Activated B cell treated with CpG ODN at 0.5 μM for 24 hours (primary cell): ENCODE measurements at regions of chr11 and their contacts with region 1.

Region 1: GRCh38 chr11:81644239-81644840 is 1089.3 kb downstream of the FAM181B start:
- DNase-seq: no peak
- ATAC-seq: peak; percentile 57
- H3K4me3 Mint-ChIP-seq: no peak overlapping the region
- H3K27ac Mint-ChIP-seq: no peak overlapping the region
- H3K4me1 Mint-ChIP-seq: no peaks in the 10 kb centered on the region
- H3K27me3 Mint-ChIP-seq: peaks cover 2% of the 10 kb centered on the region
- CTCF ChIP-seq: peak; percentile 31

Region 2: DNA sequence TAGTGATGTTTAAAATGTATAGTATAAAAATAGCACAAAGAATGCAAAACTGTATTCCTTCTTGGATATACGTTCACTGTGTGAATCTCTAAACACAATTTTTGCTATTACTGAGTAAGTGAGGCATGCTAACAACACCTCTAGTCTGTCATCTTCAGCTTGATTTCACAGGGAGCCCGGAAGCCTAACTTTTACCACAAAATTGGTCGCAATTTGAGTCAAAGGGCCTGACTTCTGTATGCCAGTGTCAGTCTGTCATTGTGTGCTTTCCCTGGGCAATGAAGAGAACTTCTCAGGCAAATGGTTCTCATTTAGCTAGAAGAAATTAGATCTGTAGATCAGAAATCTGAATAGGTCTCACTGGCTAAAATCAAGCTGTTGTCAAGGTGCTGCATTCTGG is 29.9 kb after region 1 on chr11:
- CTCF ChIA-PET with region 1: no interaction called
- POLR2A ChIA-PET with region 1: no interaction called
- intact Hi-C with region 1: no loop called
- DNase-seq: no peak
- ATAC-seq: no peak
- H3K4me3 Mint-ChIP-seq: no peak overlapping the region
- H3K27ac Mint-ChIP-seq: no peak overlapping the region
- H3K4me1 Mint-ChIP-seq: no peaks in the 10 kb centered on the region
- H3K27me3 Mint-ChIP-seq: no peaks in the 10 kb centered on the region
- CTCF ChIP-seq: no peak

Region 3: GRCh38 chr11:81787584-81788049 is 143.3 kb after region 1 on chr11:
- CTCF ChIA-PET with region 1: interaction called, 5 read pairs
- POLR2A ChIA-PET with region 1: no interaction called
- intact Hi-C with region 1: loop called (anchors 1 kb)
- DNase-seq: no peak
- ATAC-seq: no peak
- H3K4me3 Mint-ChIP-seq: no peak overlapping the region
- H3K27ac Mint-ChIP-seq: no peak overlapping the region
- H3K4me1 Mint-ChIP-seq: no peaks in the 10 kb centered on the region
- H3K27me3 Mint-ChIP-seq: no peaks in the 10 kb centered on the region
- CTCF ChIP-seq: peak; percentile 19

Region 4: DNA sequence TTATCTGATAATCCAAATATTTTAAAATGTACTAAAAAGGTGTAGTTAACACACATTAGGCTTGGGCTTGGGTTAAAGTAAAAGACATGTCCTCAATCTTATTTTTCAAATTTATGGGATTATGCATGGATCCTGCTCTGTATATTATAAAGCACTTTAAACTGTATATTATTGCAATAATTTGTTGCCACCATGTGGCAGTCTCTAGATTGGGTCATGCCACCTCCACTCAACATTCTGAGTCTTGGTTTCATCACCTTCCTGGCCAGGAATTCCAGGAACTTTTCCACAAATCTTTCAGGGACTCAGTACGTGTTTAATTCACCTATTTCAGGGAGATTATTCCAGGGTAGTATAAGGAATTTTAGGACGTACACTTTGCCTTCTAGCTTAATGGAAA is 393.8 kb after region 1 on chr11:
- CTCF ChIA-PET with region 1: no interaction called
- POLR2A ChIA-PET with region 1: no interaction called
- intact Hi-C with region 1: loop called (anchors 1 kb)
- DNase-seq: no peak
- ATAC-seq: no peak
- H3K4me3 Mint-ChIP-seq: no peak overlapping the region
- H3K27ac Mint-ChIP-seq: no peak overlapping the region
- H3K4me1 Mint-ChIP-seq: no peaks in the 10 kb centered on the region
- H3K27me3 Mint-ChIP-seq: no peaks in the 10 kb centered on the region
- CTCF ChIP-seq: no peak

Region 5: DNA sequence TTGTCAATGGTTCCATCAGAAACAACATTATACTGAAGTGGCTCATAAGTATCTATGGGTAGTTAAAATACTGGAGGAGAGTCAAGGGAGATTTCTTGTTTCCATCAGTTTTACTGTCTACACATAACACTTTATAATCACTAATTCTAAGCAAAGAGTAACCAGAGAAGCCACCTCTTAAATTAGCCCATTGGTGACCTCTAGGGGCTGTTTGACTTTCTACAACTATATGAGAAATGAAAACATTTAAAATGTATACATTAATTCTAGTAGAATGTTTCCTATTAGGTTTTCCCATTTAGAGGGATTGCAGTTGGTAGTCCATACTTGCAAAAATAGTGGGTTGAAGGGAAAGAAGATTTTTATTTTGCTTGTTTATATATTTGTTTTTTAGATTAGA is 585.0 kb after region 1 on chr11:
- CTCF ChIA-PET with region 1: interaction called, 3 read pairs
- POLR2A ChIA-PET with region 1: no interaction called
- intact Hi-C with region 1: loop called (anchors 1 kb)
- DNase-seq: no peak
- ATAC-seq: no peak
- H3K4me3 Mint-ChIP-seq: no peak overlapping the region
- H3K27ac Mint-ChIP-seq: no peak overlapping the region
- H3K4me1 Mint-ChIP-seq: no peaks in the 10 kb centered on the region
- H3K27me3 Mint-ChIP-seq: no peaks in the 10 kb centered on the region
- CTCF ChIP-seq: no peak

Region 6: DNA sequence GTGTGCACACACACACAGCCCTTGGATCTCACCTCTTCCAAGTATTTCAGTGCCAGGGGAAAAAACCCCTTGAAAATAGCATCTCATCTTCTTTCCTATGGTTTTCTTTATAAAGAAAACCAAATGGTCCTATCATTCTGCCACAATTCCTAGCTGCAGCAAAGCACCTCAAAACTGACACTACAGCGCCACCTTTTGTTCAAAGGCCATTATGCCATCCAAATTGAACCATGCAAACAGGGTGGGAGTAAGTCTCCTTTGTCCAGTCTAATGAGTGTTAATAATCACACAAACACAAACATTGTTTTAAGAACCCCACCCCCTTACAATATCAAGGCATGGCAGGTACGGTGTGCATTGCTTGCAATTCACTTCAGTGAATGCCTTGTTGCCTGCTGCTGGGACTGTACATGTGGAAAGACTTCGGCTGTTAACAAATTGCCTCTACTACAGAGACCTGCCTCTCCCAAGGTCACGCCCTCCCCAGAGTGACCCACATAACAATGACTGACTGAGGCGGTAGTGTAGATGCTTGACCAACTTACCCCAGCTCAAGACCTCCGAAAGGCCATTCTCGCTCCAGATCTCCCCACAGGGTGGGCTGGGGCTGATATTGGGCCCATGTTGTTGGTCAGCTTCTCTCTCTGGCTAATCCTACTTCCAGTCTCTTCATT is 1057.6 kb after region 1 on chr11:
- CTCF ChIA-PET with region 1: interaction called, 10 read pairs
- POLR2A ChIA-PET with region 1: no interaction called
- intact Hi-C with region 1: no loop called
- DNase-seq: no peak
- ATAC-seq: no peak
- H3K4me3 Mint-ChIP-seq: no peak overlapping the region
- H3K27ac Mint-ChIP-seq: no peak overlapping the region
- H3K4me1 Mint-ChIP-seq: no peaks in the 10 kb centered on the region
- H3K27me3 Mint-ChIP-seq: peaks cover 3% of the 10 kb centered on the region
- CTCF ChIP-seq: no peak